CD14-positive monocyte (primary cell): ENCODE measurements at regions of chr14 and their contacts with region 1.

Region 1: DNA sequence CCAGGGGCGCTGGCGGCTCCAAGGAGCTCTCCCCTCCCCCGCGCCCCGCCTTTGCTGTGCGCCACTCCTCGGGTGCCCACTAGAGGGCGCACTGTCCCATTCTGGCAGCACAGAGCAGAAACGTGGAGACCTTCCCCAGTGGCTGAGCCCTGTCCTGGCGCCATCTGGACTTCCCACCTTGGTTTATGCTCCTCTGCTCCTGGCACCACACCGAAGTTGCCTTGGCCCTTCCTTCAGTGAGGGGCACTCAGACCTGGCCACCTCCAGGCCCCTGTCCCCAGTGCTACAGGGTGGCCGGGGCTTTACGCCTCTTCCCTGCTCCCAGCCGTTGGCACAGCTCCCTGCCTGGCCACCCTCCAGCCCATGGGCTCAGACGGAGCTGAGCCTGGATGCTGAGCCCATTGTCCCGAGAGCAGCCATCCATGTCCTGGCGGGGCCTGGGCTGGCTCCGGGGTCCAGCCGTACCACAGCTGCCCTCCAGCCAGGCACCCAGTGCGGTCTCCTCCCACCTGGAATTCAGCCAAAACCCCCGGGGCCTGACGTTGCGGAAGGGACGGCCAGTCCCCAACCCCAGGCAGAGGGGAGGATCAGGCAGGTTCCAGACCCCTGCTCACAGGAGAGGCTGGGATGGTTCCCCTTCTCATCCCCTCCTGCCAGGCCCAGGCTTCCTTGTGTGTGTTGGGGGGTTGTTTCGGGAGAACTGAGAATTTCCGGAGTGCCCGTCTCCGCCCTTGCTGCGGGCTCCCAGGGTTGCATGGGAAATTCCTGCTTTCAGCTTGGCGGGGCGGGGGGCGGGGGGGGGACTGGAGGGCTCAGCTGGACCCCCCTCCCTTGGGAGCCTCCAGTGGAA is 5.5 kb upstream of the CRIP1 start:
- DNase-seq: peak; percentile 91 to 92 (median 91)
- H3K4me3 ChIP-seq: peak overlapping the region; percentile 18 to 72 (median 52)
- H3K4me3 Mint-ChIP-seq: peak overlapping the region; percentile 75 to 88
- H3K27ac ChIP-seq: peak overlapping the region; percentile 82 to 99
- H3K27ac Mint-ChIP-seq: peak overlapping the region; percentile 96 to 99 (median 99)
- H3K4me1 ChIP-seq: peaks cover 50 to 65% of the 10 kb centered on the region in 2 donors
- H3K4me1 Mint-ChIP-seq: peaks cover 51% of the 10 kb centered on the region
- H3K27me3 ChIP-seq: peaks cover 10 to 70% of the 10 kb centered on the region in 2 donors
- H3K27me3 Mint-ChIP-seq: peaks cover 52 to 86% (median 58%) of the 10 kb centered on the region in 3 donors
- CTCF ChIP-seq: peak; percentile 99

Region 2: DNA sequence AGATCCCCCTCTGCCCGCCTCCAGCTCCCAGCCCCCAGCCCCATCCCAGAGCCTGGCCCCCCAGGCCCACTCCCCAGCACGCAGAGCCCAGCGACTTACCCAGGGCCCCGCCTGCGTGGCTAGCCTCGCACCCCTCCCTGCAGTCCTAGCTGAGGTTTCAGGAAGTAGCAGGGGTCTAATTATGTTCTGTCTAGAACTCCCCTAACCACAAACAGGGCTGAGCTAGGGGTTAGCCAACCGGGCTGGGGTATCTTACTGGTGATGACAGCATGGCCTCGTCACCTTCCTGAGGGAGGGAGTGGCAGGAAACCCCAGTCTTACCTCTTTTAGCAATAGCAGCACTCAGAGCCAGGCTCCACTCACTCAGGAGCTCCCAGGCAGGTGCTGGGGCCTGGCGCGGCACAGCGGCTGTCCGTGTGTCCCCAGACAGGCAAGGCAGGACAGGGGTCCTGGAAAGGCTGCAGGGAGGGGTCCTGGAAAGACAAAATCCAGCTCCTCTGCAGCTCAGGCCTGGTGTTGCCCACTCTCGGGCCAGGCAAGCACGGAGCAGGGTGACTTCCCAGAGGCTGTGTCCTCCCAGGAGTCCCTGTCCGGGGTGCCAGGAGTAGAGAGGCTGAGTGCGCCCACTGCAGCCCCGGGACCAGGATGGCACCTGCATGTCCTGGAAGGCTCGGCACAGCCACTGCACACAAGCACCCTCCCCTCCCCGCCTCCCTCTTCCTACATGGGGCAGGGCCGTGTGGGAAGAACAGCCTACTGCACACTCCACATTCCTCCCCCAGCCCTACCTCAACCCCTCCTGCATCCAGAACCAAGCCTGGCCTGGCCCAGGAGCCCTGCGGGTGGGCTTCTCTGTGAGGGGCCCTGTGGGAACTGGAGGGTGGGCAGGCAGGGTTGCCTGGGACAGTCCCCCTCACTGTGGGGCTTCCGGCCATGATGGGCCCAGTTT is 415.6 kb before region 1 on chr14 and contains the start of gene GPR132:
- intact Hi-C with region 1: loop called (anchors 5 to 10 kb)
- DNase-seq: peak; percentile 98 to 100 (median 99)
- H3K4me3 ChIP-seq: peak within 1 kb of the TSS; percentile 72 to 87 (median 83)
- H3K4me3 Mint-ChIP-seq: peak within 1 kb of the TSS; percentile 95 to 96
- H3K27ac ChIP-seq: peak within 1 kb of the TSS; percentile 99 to 100
- H3K27ac Mint-ChIP-seq: peak within 1 kb of the TSS; percentile 98 to 99 (median 99)
- H3K4me1 ChIP-seq: peaks cover 93 to 94% of the 10 kb centered on the region in 2 donors
- H3K4me1 Mint-ChIP-seq: peaks cover 86% of the 10 kb centered on the region
- H3K27me3 ChIP-seq: no peaks in the 10 kb centered on the region
- H3K27me3 Mint-ChIP-seq: peaks cover 0 to 4% (median 3%) of the 10 kb centered on the region in 3 donors
- CTCF ChIP-seq: no peak
- polyA plus RNA-seq, gene GPR132: 6.3 to 19.0 (median 13.0) TPM

Region 3: GRCh38 chr14:105385698-105386365 is 95.3 kb before region 1 on chr14:
- intact Hi-C with region 1: no loop called
- DNase-seq: peak in 2 of 3 donors; percentile 45 to 47
- H3K4me3 ChIP-seq: no peak overlapping the region
- H3K4me3 Mint-ChIP-seq: no peak overlapping the region
- H3K27ac ChIP-seq: peak overlapping the region in 1 of 2 donors; percentile 31
- H3K27ac Mint-ChIP-seq: peak overlapping the region in 3 of 7 donors; percentile 32 to 68 (median 52)
- H3K4me1 ChIP-seq: peaks cover 42 to 56% of the 10 kb centered on the region in 2 donors
- H3K4me1 Mint-ChIP-seq: peaks cover 38% of the 10 kb centered on the region
- H3K27me3 ChIP-seq: no peaks in the 10 kb centered on the region
- H3K27me3 Mint-ChIP-seq: no peaks in the 10 kb centered on the region
- CTCF ChIP-seq: no peak

Region 4: GRCh38 chr14:105398044-105398725 is 83.0 kb before region 1 on chr14 and contains the start of gene TEX22:
- intact Hi-C with region 1: loop called in 1 of 2 experiments (anchors 2 kb)
- DNase-seq: peak; percentile 67 to 72 (median 71)
- H3K4me3 ChIP-seq: peak within 1 kb of the TSS; percentile 58 to 86 (median 84)
- H3K4me3 Mint-ChIP-seq: peak within 1 kb of the TSS; percentile 81 to 92
- H3K27ac ChIP-seq: peak within 1 kb of the TSS; percentile 59 to 93
- H3K27ac Mint-ChIP-seq: peak within 1 kb of the TSS; percentile 82 to 95 (median 89)
- H3K4me1 ChIP-seq: peaks cover 65 to 76% of the 10 kb centered on the region in 2 donors
- H3K4me1 Mint-ChIP-seq: peaks cover 57% of the 10 kb centered on the region
- H3K27me3 ChIP-seq: no peaks in the 10 kb centered on the region
- H3K27me3 Mint-ChIP-seq: peaks cover 0 to 2% (median 0%) of the 10 kb centered on the region in 3 donors
- CTCF ChIP-seq: peak; percentile 34
- polyA plus RNA-seq, gene TEX22: 0.52 to 2.2 (median 0.57) TPM